CD4-positive, alpha-beta memory T cell (primary cell): ENCODE measurements at regions of chr5 and their contacts with region 1.

Region 1: DNA sequence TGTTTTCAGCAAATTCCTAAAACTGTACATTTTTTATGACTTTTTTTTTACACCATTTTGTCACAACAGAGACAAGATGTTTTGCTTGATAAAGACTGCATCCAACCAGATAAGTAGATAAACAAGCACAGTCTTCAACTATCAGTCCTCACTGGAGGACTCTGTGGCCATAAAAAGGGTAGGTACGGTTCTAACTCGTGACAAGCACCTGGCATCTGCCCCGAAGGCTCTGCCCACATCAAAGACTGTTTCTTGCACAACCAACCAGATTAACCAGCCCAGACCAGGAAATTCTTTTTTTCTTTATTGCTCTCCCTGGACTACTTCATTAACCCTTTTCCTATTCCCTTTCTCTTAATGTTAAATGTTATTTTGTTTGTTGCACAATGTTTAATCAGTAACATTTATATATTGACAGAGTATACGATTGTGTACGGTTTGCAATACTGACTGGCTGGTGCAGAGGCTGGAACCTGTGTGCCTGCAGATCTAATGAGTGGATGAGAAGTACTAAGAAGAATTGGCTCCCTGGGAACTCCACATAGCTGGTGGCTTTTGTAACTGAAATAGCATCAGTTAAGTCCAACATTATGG is 74.1 kb downstream of the SERINC5 start:
- DNase-seq: peak; percentile 79 to 84 (median 81)
- H3K4me3 ChIP-seq: peak overlapping the region in 1 of 2 donors; percentile 5
- H3K4me3 Mint-ChIP-seq: peak overlapping the region; percentile 28 to 76 (median 69)
- H3K27ac ChIP-seq: peak overlapping the region; percentile 48
- H3K27ac Mint-ChIP-seq: peak overlapping the region; percentile 89 to 97 (median 95)
- H3K4me1 ChIP-seq: peaks cover 97% of the 10 kb centered on the region
- H3K4me1 Mint-ChIP-seq: peaks cover 67 to 91% (median 84%) of the 10 kb centered on the region in 4 donors
- H3K27me3 ChIP-seq: no peaks in the 10 kb centered on the region
- H3K27me3 Mint-ChIP-seq: no peaks in the 10 kb centered on the region

Region 2: DNA sequence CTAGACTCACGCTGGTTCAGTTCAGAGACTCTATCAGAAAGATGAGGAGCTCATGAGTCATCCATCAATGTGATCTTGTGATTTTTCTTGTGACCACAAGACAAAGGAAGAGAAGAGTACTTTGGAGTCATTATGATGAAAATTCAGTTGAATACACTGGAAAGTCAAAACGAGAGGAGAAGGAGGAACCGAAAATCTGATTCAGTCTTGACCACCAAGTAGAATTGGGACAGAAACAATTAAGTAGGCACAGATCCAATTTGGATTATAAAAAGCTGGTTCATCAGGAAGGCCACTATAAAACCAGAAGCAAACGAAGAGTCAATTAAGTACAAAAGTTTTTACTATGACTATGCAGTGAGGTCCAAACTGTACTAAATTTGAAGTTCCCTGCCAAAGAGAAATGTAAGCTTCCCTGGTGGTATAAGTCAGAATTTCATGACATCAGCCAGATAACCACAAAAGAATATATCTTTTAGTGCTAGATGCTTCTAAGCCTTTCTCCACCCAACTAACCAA is 55.7 kb before region 1 on chr5:
- CTCF ChIA-PET with region 1: interaction called, 3 read pairs
- POLR2A ChIA-PET with region 1: interaction called, 12 read pairs
- intact Hi-C with region 1: no loop called
- DNase-seq: peak in 1 of 5 donors; percentile 33
- H3K4me3 ChIP-seq: no peak overlapping the region
- H3K4me3 Mint-ChIP-seq: peak overlapping the region in 7 of 8 donors; percentile 8 to 82 (median 44)
- H3K27ac ChIP-seq: no peak overlapping the region
- H3K27ac Mint-ChIP-seq: peak overlapping the region; percentile 10 to 85 (median 64)
- H3K4me1 ChIP-seq: peaks cover 37% of the 10 kb centered on the region
- H3K4me1 Mint-ChIP-seq: peaks cover 47 to 67% (median 55%) of the 10 kb centered on the region in 4 donors
- H3K27me3 ChIP-seq: no peaks in the 10 kb centered on the region
- H3K27me3 Mint-ChIP-seq: no peaks in the 10 kb centered on the region

Region 3: DNA sequence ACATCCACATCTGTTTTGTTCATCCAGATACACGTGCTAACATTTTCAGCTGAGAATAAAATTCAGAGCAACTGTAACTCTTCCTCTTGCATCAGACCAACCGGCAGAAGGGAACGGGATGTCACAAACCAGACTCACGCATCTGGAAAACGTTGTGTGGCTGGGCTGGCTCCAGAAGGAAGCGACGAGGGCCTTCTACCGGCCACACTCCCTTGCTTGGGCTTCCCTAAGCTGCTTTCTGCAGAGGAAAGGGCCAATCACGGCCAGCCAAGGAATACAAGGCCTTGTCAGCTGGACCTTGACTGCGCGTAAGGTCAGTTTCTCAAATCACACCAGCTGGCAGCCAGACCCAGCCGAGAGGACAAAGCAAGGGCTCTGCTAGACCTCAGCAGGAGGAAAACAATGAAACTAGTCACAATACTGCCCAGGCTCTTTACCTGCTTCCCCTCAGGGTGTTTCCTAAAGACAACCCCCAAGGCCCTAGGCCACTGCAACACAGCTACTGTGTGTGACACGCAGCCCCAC is 40.5 kb before region 1 on chr5:
- CTCF ChIA-PET with region 1: interaction called, 3 read pairs
- POLR2A ChIA-PET with region 1: interaction called, 57 read pairs
- intact Hi-C with region 1: loop called (anchors 1 kb)
- DNase-seq: no peak
- H3K4me3 ChIP-seq: no peak overlapping the region
- H3K4me3 Mint-ChIP-seq: peak overlapping the region in 7 of 8 donors; percentile 18 to 82 (median 60)
- H3K27ac ChIP-seq: peak overlapping the region; percentile 37
- H3K27ac Mint-ChIP-seq: peak overlapping the region; percentile 89 to 96 (median 95)
- H3K4me1 ChIP-seq: peaks cover 86% of the 10 kb centered on the region
- H3K4me1 Mint-ChIP-seq: peaks cover 65 to 82% (median 75%) of the 10 kb centered on the region in 4 donors
- H3K27me3 ChIP-seq: no peaks in the 10 kb centered on the region
- H3K27me3 Mint-ChIP-seq: no peaks in the 10 kb centered on the region

Region 4: GRCh38 chr5:80165452-80165851 is 16.3 kb before region 1 on chr5:
- CTCF ChIA-PET with region 1: interaction called, 3 read pairs
- POLR2A ChIA-PET with region 1: interaction called, 6 read pairs
- intact Hi-C with region 1: loop called (anchors 2 kb)
- DNase-seq: no peak
- H3K4me3 ChIP-seq: no peak overlapping the region
- H3K4me3 Mint-ChIP-seq: peak overlapping the region in 1 of 8 donors; percentile 34
- H3K27ac ChIP-seq: no peak overlapping the region
- H3K27ac Mint-ChIP-seq: peak overlapping the region in 6 of 7 donors; percentile 29 to 82 (median 60)
- H3K4me1 ChIP-seq: peaks cover 38% of the 10 kb centered on the region
- H3K4me1 Mint-ChIP-seq: peaks cover 36 to 65% (median 53%) of the 10 kb centered on the region in 4 donors
- H3K27me3 ChIP-seq: no peaks in the 10 kb centered on the region
- H3K27me3 Mint-ChIP-seq: no peaks in the 10 kb centered on the region

Region 5: DNA sequence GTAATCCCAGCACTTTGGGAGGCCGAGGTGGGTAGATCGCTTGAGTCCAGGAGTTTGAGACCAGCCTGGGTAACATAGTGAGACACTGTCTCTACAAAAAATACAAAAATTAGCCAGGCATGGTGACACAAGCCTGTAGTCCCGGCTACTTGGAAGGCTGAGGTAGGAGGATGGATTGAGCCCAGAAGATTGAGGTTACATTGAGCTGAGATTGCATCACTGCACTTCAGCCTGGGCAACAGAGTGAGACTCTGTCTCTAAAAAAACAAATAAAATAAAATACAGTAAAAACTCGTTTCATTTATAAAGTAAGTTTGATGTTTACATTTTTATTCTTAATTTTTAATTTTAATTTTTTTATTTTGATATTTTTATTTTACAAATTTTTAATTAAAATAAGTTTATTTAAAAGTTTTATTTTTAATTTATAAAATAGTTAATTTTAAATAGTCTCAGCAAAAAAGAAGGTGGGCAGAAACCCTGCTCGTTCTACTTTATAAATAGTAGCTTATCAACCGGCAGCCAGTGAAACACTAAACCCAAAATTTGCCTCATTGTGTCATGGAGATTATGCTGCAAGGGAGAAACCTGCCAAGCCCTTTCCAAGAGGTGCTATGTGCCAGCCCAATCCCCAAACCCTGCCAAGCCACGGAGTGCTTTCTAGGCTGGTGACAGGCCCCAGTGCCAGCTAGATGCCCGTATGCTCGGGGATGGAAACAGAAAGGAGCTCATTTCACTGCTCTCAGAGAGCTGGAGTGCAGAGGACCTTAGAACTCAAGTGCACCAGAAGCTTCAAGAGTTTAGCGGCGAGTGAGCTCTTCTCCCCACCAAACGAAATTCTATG is 35.3 kb after region 1 on chr5:
- CTCF ChIA-PET with region 1: interaction called, 3 read pairs
- POLR2A ChIA-PET with region 1: interaction called, 4 read pairs
- intact Hi-C with region 1: loop called (anchors 5 kb)
- DNase-seq: peak in 1 of 5 donors; percentile 55
- H3K4me3 ChIP-seq: peak overlapping the region in 1 of 2 donors; percentile 25
- H3K4me3 Mint-ChIP-seq: peak overlapping the region in 7 of 8 donors; percentile 46 to 96 (median 81)
- H3K27ac ChIP-seq: peak overlapping the region; percentile 37
- H3K27ac Mint-ChIP-seq: peak overlapping the region; percentile 31 to 99 (median 93)
- H3K4me1 ChIP-seq: peaks cover 98% of the 10 kb centered on the region
- H3K4me1 Mint-ChIP-seq: peaks cover 75 to 97% (median 86%) of the 10 kb centered on the region in 4 donors
- H3K27me3 ChIP-seq: no peaks in the 10 kb centered on the region
- H3K27me3 Mint-ChIP-seq: no peaks in the 10 kb centered on the region